BJ (cell line): ENCODE measurements at regions of chr1 and their contacts with region 1.

Region 1: DNA sequence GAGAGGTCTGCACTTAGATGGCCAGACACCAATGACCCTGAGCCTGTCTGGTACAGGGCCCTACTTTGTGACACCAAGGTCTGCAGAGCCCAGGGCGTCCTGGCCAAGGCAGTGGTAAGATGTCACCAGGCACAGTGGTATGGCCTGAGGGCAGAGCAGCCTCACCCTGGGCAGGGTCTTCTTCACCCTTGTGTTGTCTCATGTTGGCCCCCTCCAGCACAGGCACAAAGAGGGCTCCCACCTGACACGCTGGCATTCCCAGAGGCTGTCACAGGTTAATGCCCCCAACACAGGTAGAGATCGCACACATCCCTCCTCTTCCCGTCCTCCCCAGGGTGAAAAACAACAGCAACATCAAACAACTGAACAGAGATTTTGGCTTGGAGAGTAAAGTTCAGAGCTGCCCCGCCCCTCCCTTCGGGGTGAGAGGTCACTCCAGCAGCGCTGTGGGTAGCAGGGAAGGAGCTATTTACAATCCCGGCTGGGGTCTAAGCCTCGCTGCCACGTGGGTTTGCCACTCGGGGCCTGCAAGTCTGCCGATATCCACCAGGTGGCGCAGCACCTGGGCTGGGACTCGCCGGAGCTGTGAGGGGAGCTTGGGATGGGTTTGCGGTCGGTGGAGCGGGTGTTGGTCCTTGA is 12.6 kb downstream of the EFNA3 start:
- DNase-seq: no peak
- H3K4me3 ChIP-seq: no peak overlapping the region
- H3K27me3 ChIP-seq: peaks cover 4% of the 10 kb centered on the region
- CTCF ChIP-seq: peak; percentile 98

Region 2: DNA sequence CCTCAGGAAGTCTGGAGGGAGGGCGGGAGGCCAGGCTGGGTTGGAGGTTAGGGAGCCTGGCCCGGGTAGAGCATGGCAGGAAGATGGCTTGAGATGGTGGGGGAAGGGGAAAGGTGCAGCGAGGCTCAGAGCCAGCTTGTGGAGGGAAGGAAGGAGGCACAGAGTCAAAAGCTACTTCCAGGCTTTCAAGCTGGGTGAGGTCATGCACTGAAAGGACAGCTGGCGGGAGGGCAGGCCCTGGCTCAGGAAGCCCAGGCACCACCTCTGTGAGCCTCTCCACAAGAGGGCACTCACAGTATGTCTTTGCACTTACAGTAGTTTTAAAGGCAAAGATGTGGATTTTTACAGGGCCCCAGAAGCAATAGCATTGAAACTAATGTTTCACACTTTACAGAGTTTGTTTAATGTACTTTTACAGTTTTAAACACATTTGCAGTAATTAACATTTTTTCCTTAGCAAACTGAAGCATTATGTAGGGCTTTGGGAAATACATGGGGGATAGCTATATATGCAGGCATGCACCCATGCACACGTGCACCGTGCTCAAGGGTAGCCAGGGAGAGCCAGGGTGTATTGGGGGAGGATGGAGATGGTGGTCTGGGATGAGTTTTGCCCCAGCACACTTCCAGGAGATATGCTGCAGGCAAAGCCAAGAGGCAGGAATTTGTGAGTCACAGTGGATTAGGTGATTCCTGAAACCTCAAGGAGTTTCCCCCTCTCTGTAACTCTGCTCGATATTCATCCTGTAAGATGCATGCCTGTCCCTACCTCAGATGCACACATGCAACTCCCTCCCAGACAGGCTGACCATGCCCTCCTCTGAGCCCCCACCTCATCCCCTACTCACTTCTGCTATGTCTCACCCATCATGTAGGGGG is 46.1 kb before region 1 on chr1:
- CTCF ChIA-PET with region 1: interaction called, 86 read pairs
- POLR2A ChIA-PET with region 1: no interaction called
- DNase-seq: no peak
- H3K4me3 ChIP-seq: no peak overlapping the region
- H3K27me3 ChIP-seq: no peaks in the 10 kb centered on the region; the same call in 1 of the 2 replicates
- CTCF ChIP-seq: peak; percentile 83

Region 3: DNA sequence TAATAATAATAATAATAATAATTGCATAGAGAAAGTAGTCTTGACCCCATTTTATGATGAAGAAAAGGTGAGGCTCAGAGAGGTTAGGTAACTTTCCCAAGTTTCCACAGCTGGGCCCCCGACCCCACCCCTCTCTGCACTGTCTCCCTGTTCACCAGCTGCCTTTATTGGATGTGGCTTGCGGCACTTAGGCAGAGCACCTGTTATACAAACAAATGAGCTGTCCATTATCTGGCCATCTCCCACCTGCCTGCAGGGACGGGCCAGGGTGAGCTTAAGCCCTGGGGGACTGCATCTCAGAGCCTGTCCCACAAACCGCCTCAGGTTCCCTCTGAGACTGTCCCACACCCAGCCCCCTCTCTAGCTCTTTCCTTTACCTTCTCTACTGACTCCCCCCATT is 26.4 kb after region 1 on chr1:
- CTCF ChIA-PET with region 1: interaction called, 15 read pairs
- POLR2A ChIA-PET with region 1: no interaction called
- DNase-seq: no peak
- H3K4me3 ChIP-seq: no peak overlapping the region
- H3K27me3 ChIP-seq: peaks cover 26% of the 10 kb centered on the region
- CTCF ChIP-seq: no peak

Region 4: GRCh38 chr1:155135415-155136028 is 44.3 kb after region 1 on chr1 and contains the start of gene SLC50A1:
- CTCF ChIA-PET with region 1: interaction called, 22 read pairs
- POLR2A ChIA-PET with region 1: no interaction called
- DNase-seq: peak; percentile 73
- H3K4me3 ChIP-seq: peak within 1 kb of the TSS; percentile 82
- H3K27me3 ChIP-seq: no peaks in the 10 kb centered on the region
- CTCF ChIP-seq: no peak
- polyA plus RNA-seq, gene SLC50A1: 39.5 and 47.4 TPM in 2 replicates

Region 5: DNA sequence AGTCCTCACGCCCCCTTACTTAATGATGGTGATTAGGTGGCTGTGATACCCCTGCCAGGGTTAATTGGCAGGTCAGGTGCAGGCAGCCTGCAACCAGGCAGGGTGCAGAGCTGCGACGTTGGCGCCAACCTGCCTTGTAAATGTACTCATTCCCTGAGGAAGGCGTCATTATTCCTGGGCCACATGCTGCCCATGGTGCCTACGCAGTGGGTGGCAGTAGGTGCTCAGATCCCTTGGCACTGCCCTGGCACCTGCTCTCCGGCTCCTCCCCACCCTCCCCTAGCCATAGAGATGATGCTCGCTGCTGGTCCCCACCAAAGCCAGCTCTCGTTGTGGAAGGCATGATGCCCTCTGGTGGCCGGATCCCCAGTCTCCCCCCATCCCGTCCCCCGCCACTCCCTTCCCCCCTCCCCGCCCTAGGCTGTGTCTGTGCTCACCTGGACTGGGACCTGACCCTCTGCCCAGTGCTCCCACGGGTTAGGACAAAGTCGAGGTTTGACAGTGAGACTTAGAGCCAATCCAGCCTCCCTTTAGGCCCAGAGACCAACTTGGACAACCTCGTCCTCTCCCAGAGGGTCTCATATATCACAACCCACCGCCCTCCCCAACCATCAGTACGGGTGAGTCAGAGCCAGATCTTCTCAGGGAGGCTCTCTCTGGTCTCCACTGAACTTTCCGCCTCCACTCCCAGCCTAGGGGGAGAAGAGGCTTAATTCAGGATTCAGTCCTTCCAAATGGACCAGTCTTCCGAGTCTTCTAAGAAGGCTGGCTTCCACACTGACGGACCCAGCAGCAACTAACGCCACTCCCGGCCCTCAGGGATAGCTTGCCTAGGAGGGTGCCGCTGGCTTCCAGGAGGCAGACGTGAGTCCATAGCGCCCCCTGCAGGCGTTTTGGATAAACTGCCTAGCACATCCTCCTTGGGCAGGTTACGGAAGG is 76.2 kb after region 1 on chr1:
- CTCF ChIA-PET with region 1: interaction called, 259 read pairs
- POLR2A ChIA-PET with region 1: no interaction called
- DNase-seq: no peak
- H3K4me3 ChIP-seq: no peak overlapping the region
- H3K27me3 ChIP-seq: peaks cover 4% of the 10 kb centered on the region; the same call in 1 of the 2 replicates
- CTCF ChIP-seq: peak; percentile 90